Calu3 (cell line): ENCODE measurements at regions of chr20 and their contacts with region 1.

Region 1: DNA sequence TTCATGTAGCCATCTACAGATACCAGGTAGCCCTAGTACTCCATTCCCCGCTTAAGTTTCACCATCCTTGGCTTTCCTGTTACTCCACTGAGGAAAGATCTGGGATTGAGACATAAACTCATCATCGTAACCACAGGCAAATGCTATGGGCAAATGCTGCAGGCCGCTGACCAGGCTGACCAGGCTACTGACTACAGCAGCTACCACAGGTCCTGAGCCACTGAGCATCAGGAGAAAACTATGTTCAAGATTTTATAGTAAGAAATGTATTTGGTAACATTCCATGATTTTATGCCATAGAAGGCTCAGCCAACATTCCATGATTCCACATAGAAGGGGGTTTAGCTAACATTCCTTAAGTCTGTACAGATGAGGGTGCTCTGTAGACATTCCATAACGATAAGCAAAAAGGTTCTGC is 16.1 kb upstream of the B4GALT5 start:
- DNase-seq: no peak
- H3K4me3 Mint-ChIP-seq: no peak overlapping the region
- H3K27ac Mint-ChIP-seq: no peak overlapping the region
- H3K4me1 Mint-ChIP-seq: peaks cover 17% of the 10 kb centered on the region
- H3K27me3 Mint-ChIP-seq: no peaks in the 10 kb centered on the region
- CTCF ChIP-seq: no peak

Region 2: GRCh38 chr20:49435659-49436058 is 294.1 kb before region 1 on chr20:
- CTCF ChIA-PET with region 1: interaction called, 11 read pairs
- intact Hi-C with region 1: no loop called
- DNase-seq: peak; percentile 43
- H3K4me3 Mint-ChIP-seq: no peak overlapping the region
- H3K27ac Mint-ChIP-seq: no peak overlapping the region
- H3K4me1 Mint-ChIP-seq: no peaks in the 10 kb centered on the region
- H3K27me3 Mint-ChIP-seq: peaks cover 100% of the 10 kb centered on the region
- CTCF ChIP-seq: peak; percentile 27